GM12878 (cell line): ENCODE measurements at regions of chr11 and their contacts with region 1.

Region 1: DNA sequence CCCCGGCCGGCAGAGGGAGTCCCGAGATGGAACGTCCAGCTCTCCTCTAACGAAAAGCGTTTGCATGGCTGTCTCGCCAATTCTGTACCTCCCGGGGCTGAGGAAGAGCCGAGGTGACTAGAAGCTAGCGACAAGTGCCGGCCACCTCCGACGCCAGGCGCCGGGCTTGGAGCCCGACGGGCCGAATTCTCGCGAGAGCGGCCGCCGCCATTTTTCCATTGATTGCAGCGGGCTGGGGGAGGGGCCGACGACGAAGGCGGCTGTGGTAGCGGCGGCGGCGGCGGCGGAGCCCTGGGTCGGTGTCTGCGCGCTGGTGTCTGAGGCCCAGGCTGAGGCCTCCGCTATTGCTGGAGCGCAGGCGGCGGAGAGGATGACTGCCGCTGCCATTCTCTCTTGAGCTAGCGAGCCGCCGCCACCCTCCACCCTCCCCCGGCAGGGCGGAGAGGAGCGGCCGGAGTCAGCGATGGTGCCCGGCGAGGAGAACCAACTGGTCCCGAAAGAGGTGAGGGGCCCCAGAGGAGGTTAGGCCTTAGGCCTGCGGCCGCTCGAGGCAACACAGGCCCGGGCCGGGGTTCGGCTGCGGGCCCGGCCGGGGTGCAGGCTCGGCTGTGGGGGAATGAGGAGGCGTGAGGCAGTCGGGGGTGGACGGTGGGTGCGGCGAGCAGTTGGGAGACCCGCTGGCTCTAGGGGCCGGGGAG is at the start of gene USP47:
- DNase-seq: no peak
- ATAC-seq: peak; percentile 78
- H3K4me3 ChIP-seq: peak within 1 kb of the TSS; percentile 77
- H3K27ac ChIP-seq: peak within 1 kb of the TSS; percentile 96
- H3K4me1 ChIP-seq: peaks cover 2% of the 10 kb centered on the region; the same call in 1 of the 2 replicates
- H3K27me3 ChIP-seq: no peaks in the 10 kb centered on the region
- CTCF ChIP-seq: peak in 2 of 3 experiments; percentile 27 to 50; a peak in 3 of 6 replicates
- EP300 ChIP-seq: no peak
- POLR2A ChIP-seq: peak; percentile 94
- RAD21 ChIP-seq: peak; percentile 26; the same call in 1 of the 2 replicates
- polyA plus RNA-seq, gene USP47: 13.9 to 14.8 TPM

Region 2: DNA sequence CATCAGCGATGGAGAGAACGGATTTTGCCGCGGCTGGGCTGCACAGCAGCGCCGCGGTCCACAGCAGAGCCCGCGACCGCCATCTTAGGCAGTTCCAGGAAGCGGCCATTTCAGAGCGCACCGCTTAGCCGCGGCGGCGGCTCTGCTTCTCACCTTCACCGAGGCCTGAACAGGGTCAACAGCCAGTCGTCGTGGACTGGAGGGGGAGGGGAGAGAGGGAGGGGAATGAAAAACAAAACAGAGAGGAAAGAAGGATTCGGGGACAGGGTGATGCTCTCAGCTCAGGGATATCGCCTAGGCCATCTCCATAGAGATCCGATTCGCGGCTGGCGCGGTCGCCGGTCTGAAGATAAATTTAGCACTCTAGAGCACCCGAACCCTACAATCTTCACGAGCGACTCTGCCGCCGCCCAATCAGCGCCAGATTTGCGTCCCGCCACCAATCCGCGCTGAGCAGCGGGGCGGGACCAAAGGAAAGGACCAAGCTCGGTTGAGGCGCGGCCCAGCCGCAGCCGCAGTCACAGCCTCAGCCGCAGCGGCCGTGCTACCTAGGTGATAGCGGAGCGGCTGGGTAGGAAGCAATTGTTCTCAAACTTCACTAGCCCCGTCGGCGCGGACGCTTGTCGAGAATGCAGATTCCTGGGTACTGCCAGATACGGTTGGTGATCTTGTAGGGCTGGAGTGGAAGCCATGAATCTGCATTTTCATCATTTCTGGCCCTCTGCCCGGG is 984.0 kb before region 1 on chr11 and contains the start of gene ZBED5:
- CTCF ChIA-PET with region 1: no interaction called
- POLR2A ChIA-PET with region 1: no interaction called
- RAD21 ChIA-PET with region 1: no interaction called
- SMC1A ChIA-PET with region 1: interaction called, 3 read pairs
- in situ Hi-C with region 1: no loop called
- intact Hi-C with region 1: loop called (anchors 10 kb)
- DNase-seq: peak; percentile 90
- ATAC-seq: peak; percentile 95
- H3K4me3 ChIP-seq: peak within 1 kb of the TSS; percentile 92
- H3K27ac ChIP-seq: peak within 1 kb of the TSS; percentile 87
- H3K4me1 ChIP-seq: no peaks in the 10 kb centered on the region
- H3K27me3 ChIP-seq: no peaks in the 10 kb centered on the region
- CTCF ChIP-seq: peak in 2 of 3 experiments; percentile 1 to 4; a peak in 1 of 6 replicates
- EP300 ChIP-seq: peak in 1 of 2 experiments; percentile 53; a peak in 3 of 4 replicates
- POLR2A ChIP-seq: peak; percentile 84
- RAD21 ChIP-seq: no peak
- polyA plus RNA-seq, gene ZBED5: 27.3 to 29.4 TPM

Region 3: DNA sequence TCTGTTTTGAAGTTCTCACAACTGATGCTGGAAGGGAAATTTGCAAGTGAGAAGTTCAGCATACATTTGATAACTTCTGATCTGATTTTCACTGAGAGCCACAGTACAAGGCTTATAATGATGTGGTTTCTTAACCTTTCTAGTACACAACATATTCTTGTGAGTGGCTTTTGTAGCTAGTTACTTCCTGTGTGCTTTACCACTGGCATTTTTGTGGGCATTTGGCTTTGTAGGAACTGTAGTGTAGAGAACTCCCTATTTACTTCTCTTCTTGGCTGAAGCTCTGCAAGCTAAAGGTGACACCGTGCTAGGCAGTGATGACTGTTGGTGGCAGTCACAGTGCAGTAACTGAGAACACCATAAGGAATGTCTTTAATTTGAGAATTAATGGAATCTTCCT is 14.8 kb after region 1 on chr11:
- CTCF ChIA-PET with region 1: interaction called, 211 read pairs
- POLR2A ChIA-PET with region 1: interaction called, 6 read pairs
- RAD21 ChIA-PET with region 1: interaction called, 18 read pairs
- SMC1A ChIA-PET with region 1: interaction called, 29 read pairs
- in situ Hi-C with region 1: no loop called
- intact Hi-C with region 1: no loop called
- DNase-seq: peak; percentile 52
- ATAC-seq: peak; percentile 83
- H3K4me3 ChIP-seq: no peak overlapping the region
- H3K27ac ChIP-seq: no peak overlapping the region
- H3K4me1 ChIP-seq: peaks cover 7% of the 10 kb centered on the region; the same call in 1 of the 2 replicates
- H3K27me3 ChIP-seq: no peaks in the 10 kb centered on the region
- CTCF ChIP-seq: no peak
- EP300 ChIP-seq: no peak
- POLR2A ChIP-seq: no peak
- RAD21 ChIP-seq: no peak

Region 4: DNA sequence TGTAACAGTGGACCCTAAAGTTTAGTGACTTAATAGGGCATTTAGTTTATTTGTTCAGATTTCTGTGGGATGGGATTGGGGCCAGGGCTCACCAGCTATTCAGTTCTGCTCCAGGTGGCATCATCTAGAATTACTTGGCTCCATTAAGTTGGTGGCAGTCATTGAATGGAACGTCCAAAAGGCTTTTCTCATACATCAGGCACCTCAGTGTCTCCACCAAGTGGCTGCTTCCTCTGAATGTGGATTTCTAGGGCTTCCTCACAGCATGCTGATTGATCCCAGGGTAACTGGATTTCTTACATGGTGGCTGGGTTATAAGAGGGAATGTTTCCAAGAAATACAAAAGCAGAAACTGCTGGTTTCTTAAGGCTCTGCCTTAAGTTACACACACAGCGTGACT is 34.6 kb after region 1 on chr11:
- CTCF ChIA-PET with region 1: interaction called, 13 read pairs
- POLR2A ChIA-PET with region 1: interaction called, 4 read pairs
- RAD21 ChIA-PET with region 1: interaction called, 3 read pairs
- SMC1A ChIA-PET with region 1: interaction called, 5 read pairs
- in situ Hi-C with region 1: no loop called
- intact Hi-C with region 1: no loop called
- DNase-seq: no peak
- ATAC-seq: peak; percentile 61
- H3K4me3 ChIP-seq: no peak overlapping the region
- H3K27ac ChIP-seq: no peak overlapping the region
- H3K4me1 ChIP-seq: peaks cover 4% of the 10 kb centered on the region; the same call in 1 of the 2 replicates
- H3K27me3 ChIP-seq: no peaks in the 10 kb centered on the region
- CTCF ChIP-seq: peak; percentile 3 to 29 (median 23); a peak in 2 of 6 replicates
- EP300 ChIP-seq: no peak
- POLR2A ChIP-seq: no peak
- RAD21 ChIP-seq: no peak